ENCODE measurements at regions of chr12 and their contacts with region 1.

Region 1: DNA sequence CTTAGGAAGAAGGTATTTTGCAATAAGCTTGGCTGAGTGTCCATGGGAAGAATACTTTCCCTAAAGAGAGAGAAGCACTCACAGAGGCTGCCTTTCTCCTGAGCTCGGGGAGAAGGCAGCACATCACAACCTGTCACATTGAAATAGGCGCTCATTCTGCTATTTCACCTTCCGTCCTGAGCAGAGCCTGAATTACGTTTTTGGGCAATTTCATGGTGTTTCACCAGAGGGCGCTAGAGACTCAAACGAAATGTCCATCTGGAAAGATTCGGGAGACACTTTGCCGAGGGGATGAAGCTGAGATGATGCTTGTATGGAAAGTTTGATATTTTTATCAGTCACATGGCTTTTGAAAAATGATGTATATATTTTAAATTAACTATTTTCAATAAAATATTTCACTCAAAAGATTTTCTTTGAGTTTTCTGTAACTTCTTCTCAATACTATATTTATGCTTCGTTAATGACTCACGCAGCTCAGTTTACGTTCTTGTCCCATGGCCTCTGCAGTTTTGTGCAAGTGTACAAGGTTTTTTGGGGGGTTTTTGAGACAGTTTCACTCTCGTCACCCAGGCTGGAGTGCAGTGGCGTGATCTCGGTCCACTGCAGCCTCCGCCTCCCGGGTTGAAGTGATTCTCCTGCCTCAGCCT is 17.4 kb upstream of the B4GALNT3 start:
- DNase-seq: peak; percentile 63
- H3K4me3 Mint-ChIP-seq: no peak overlapping the region
- H3K27ac Mint-ChIP-seq: no peak overlapping the region
- H3K4me1 Mint-ChIP-seq: no peaks in the 10 kb centered on the region
- H3K27me3 Mint-ChIP-seq: no peaks in the 10 kb centered on the region

Region 2: DNA sequence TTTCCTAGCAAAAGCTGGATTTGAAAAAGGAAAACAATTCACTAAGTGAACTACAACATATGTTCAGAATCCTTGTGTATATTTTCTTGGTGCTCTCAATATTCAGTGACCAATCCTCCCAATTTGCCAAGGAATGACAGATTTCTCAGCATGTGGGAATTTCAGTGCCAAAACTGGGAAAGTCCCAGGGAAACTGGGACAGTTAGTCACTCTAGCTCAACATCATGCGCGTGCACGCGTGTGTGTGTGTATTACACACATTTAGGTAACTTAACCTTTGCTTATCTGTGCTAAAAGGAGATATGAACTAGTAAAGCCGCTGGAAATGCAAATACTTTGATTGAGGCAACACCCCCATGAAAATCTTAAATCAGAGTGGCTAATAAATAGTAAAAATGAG is 153.7 kb before region 1 on chr12:
- CTCF ChIA-PET with region 1: no interaction called
- DNase-seq: no peak
- H3K4me3 Mint-ChIP-seq: no peak overlapping the region
- H3K27ac Mint-ChIP-seq: no peak overlapping the region
- H3K4me1 Mint-ChIP-seq: peaks cover 3% of the 10 kb centered on the region
- H3K27me3 Mint-ChIP-seq: no peaks in the 10 kb centered on the region

Region 3: GRCh38 chr12:422526-422925 is 19.8 kb before region 1 on chr12:
- CTCF ChIA-PET with region 1: interaction called, 18 read pairs
- DNase-seq: no peak
- H3K4me3 Mint-ChIP-seq: no peak overlapping the region
- H3K27ac Mint-ChIP-seq: no peak overlapping the region
- H3K4me1 Mint-ChIP-seq: no peaks in the 10 kb centered on the region
- H3K27me3 Mint-ChIP-seq: no peaks in the 10 kb centered on the region

Region 4: GRCh38 chr12:452667-453210 is 10.4 kb after region 1 on chr12:
- CTCF ChIA-PET with region 1: interaction called, 19 read pairs
- DNase-seq: peak; percentile 67
- H3K4me3 Mint-ChIP-seq: no peak overlapping the region
- H3K27ac Mint-ChIP-seq: no peak overlapping the region
- H3K4me1 Mint-ChIP-seq: peaks cover 3% of the 10 kb centered on the region
- H3K27me3 Mint-ChIP-seq: peaks cover 48% of the 10 kb centered on the region

Region 5: GRCh38 chr12:538731-539539 is 96.6 kb after region 1 on chr12:
- CTCF ChIA-PET with region 1: interaction called, 17 read pairs
- DNase-seq: peak; percentile 72
- H3K4me3 Mint-ChIP-seq: no peak overlapping the region
- H3K27ac Mint-ChIP-seq: peak overlapping the region; percentile 85
- H3K4me1 Mint-ChIP-seq: peaks cover 29% of the 10 kb centered on the region
- H3K27me3 Mint-ChIP-seq: peaks cover 39% of the 10 kb centered on the region

Region 6: GRCh38 chr12:546921-547845 is 104.8 kb after region 1 on chr12:
- CTCF ChIA-PET with region 1: interaction called, 102 read pairs
- DNase-seq: peak; percentile 74
- H3K4me3 Mint-ChIP-seq: no peak overlapping the region
- H3K27ac Mint-ChIP-seq: peak overlapping the region; percentile 24
- H3K4me1 Mint-ChIP-seq: peaks cover 36% of the 10 kb centered on the region
- H3K27me3 Mint-ChIP-seq: peaks cover 93% of the 10 kb centered on the region

Region 7: GRCh38 chr12:591167-592023 is 149.0 kb after region 1 on chr12:
- CTCF ChIA-PET with region 1: no interaction called
- DNase-seq: no peak
- H3K4me3 Mint-ChIP-seq: no peak overlapping the region
- H3K27ac Mint-ChIP-seq: no peak overlapping the region
- H3K4me1 Mint-ChIP-seq: no peaks in the 10 kb centered on the region
- H3K27me3 Mint-ChIP-seq: peaks cover 42% of the 10 kb centered on the region

Region 8: DNA sequence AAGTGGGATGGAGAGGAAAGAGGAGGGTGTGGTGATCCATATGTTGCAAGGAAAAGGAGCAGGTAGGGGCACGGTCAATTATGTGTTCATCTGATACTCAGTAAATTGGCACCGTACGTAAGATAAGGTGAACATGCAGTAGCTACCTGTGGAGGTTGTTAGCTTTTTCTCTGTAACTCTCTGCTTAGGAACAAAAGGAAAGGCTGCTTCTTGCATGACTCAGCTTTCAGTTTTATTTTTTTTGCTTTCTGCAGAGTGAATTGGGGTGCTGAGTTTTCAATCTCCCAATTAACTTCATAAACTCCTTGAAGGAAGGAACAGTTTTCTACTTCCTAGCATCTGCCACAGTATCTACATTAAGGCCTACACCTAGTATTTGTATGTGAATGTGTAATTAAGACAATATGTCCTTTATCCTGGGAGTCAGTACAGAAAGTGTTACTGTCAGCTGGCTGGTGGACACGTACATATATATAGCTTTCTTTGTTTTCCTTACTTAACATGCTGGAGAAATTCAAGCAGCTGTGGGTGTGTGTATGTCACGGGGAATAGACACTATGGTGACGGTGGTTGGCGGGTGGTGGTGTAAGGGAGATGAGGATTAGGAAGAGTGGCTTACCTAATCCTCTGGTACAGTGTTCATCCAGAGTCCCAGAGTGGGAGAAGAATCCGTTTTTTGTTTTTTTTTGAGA is 270.0 kb after region 1 on chr12:
- CTCF ChIA-PET with region 1: no interaction called
- DNase-seq: no peak
- H3K4me3 Mint-ChIP-seq: no peak overlapping the region
- H3K27ac Mint-ChIP-seq: no peak overlapping the region
- H3K4me1 Mint-ChIP-seq: peaks cover 14% of the 10 kb centered on the region
- H3K27me3 Mint-ChIP-seq: peaks cover 5% of the 10 kb centered on the region

Region 9: GRCh38 chr12:737122-737739 is 294.9 kb after region 1 on chr12:
- CTCF ChIA-PET with region 1: no interaction called
- DNase-seq: no peak
- H3K4me3 Mint-ChIP-seq: no peak overlapping the region
- H3K27ac Mint-ChIP-seq: no peak overlapping the region
- H3K4me1 Mint-ChIP-seq: peaks cover 6% of the 10 kb centered on the region
- H3K27me3 Mint-ChIP-seq: no peaks in the 10 kb centered on the region